Activated CD8-positive, alpha-beta memory T cell treated with anti-CD3 and anti-CD28 coated beads, Interleukin-2, amount 10 ng/mL, durations not matched to agents 7 days and 5 days (primary cell): ENCODE measurements at regions of chr6 and their contacts with region 1.

Region 1: GRCh38 chr6:30828027-30828960 is 56.0 kb upstream of the DDR1 start:
- DNase-seq: peak; percentile 86
- ATAC-seq: peak; percentile 83
- H3K4me3 Mint-ChIP-seq: peak overlapping the region; percentile 82
- H3K27ac Mint-ChIP-seq: peak overlapping the region; percentile 98
- H3K4me1 Mint-ChIP-seq: peaks cover 56% of the 10 kb centered on the region
- H3K27me3 Mint-ChIP-seq: no peaks in the 10 kb centered on the region

Region 2: DNA sequence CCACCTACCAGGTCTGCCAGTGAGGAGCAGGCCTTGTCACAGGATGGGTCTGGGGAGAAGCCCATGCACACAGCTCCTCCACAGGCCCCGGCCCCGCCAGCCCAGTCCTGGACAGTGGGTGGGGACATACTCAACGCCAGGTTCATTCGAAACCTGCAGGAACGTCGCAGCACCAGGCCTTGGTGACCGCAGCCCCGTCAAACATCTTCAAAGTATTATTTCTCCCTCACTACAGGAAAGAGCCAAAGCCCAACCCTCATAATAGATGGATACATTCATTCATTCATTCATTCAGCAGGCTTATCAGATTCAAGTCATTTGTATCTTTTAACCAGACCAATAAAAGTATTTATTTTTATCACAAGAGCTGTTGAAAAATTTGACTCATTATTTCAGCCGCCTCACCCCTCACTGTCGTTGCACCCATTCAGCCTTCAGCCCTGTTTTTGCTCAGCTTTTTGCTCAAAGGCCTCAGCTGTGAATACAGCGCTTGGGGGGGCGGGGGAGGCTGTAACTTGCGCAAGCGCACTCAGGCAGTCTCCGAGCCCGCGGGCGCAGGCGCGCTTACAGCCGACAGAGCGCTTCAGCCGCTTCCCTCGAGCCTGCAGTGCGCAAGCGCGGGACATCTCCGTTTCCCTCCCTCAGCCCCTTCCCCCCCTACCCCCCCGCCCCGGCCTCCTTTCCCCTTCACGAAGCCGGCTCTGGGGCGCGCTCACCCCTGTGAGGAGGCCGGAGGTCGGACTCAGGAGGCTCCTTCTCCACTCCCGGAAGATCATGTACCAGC is 181.6 kb before region 1 on chr6 and contains the start of gene C6orf136:
- CTCF ChIA-PET with region 1: no interaction called
- DNase-seq: peak; percentile 96
- ATAC-seq: peak; percentile 81
- H3K4me3 Mint-ChIP-seq: peak within 1 kb of the TSS; percentile 83
- H3K27ac Mint-ChIP-seq: peak within 1 kb of the TSS; percentile 88
- H3K4me1 Mint-ChIP-seq: peaks cover 26% of the 10 kb centered on the region
- H3K27me3 Mint-ChIP-seq: no peaks in the 10 kb centered on the region
- total RNA-seq, gene C6orf136: 32.5 to 33.9 TPM

Region 3: DNA sequence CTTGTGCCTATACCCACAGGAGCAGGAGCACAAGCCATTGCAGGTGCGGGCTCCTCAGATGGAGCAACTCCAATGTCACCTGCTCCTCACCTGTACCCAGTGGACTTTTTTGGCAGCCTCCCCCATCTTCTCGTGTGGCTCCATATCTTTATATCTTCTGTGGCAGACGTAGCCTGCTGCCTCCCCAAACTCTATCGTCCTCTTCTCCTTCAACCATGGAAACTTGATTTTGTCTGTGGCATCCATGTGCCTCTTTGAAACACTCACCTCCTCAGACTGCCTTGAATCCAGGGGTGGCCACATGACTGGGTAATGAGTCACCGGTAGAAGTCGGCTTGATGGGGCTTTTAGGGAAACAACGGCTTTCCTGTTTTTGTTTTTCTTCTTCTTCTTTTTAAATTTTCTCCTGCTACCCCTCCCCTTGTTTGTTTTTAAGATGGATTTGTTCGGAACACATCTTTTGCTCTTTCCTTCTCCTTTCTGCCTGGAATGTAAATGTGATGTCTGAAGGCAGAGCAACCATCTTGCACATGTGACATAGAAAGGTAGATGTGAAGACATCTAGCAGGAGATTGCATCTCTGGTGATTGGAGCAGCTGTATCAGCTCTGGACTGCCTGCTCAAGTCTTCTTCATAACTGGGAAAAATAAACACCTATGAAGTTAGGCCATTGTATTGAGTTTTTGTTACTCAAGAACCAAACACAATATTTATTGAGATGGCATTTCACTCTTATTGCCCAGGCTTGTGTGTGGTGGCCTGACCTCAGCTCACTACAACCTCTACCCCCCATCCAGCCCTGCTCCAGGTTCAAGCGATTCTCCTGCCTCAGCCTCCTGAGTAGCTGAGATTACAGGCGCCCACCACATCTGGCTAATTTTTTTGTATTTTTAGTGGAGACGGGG is 13.9 kb before region 1 on chr6:
- CTCF ChIA-PET with region 1: interaction called, 10 read pairs
- DNase-seq: peak; percentile 70
- ATAC-seq: peak; percentile 81
- H3K4me3 Mint-ChIP-seq: no peak overlapping the region
- H3K27ac Mint-ChIP-seq: peak overlapping the region; percentile 90
- H3K4me1 Mint-ChIP-seq: peaks cover 75% of the 10 kb centered on the region
- H3K27me3 Mint-ChIP-seq: no peaks in the 10 kb centered on the region

Region 4: DNA sequence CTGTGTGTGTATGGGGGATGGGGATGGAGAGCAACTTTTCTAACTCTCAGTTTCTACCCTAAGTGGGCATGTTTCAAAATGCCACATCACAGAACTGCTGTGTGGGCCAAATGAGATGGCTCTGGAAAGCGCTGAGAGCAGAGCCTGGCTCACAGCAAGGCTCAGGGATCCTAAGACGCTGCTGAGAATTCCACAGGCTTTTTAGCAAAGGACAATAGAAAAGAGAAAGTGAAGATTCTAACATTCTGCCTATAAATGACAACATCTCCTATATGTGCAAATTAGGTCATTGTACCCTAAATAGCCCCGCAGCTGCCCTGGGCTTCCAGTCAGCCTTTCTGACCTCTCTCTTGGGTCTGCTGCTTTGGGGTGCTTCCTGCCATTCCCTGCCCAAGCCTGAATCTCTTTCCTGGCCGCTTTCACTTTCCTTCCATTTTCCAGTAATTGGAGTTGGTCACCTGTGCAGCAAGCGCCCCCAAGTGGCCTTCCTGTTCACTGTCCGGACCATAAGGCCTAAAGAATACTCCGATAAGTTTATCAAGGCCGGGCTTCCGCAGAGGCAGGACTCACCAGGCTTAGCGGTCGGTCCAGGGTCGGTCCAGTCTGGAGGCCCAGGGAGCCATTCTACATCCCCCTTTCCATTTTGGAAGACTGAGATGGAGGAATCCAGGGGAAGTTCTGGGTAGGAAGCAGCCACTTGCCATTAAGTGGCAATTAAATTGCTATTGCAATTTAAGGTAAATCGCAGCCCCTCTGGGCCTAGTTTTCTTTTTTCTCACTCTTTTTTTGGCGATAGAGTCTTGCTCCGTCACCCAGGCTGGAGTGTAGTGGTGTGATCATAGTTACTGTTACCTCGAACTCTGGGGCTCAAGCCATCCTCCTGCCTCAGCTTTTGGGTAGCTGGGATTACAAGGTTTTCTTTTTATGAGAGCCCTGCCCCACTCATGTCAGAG is 49.4 kb after region 1 on chr6:
- CTCF ChIA-PET with region 1: interaction called, 191 read pairs
- DNase-seq: peak; percentile 86
- ATAC-seq: peak; percentile 96
- H3K4me3 Mint-ChIP-seq: peak overlapping the region; percentile 66
- H3K27ac Mint-ChIP-seq: peak overlapping the region; percentile 68
- H3K4me1 Mint-ChIP-seq: peaks cover 12% of the 10 kb centered on the region
- H3K27me3 Mint-ChIP-seq: peaks cover 4% of the 10 kb centered on the region

Region 5: DNA sequence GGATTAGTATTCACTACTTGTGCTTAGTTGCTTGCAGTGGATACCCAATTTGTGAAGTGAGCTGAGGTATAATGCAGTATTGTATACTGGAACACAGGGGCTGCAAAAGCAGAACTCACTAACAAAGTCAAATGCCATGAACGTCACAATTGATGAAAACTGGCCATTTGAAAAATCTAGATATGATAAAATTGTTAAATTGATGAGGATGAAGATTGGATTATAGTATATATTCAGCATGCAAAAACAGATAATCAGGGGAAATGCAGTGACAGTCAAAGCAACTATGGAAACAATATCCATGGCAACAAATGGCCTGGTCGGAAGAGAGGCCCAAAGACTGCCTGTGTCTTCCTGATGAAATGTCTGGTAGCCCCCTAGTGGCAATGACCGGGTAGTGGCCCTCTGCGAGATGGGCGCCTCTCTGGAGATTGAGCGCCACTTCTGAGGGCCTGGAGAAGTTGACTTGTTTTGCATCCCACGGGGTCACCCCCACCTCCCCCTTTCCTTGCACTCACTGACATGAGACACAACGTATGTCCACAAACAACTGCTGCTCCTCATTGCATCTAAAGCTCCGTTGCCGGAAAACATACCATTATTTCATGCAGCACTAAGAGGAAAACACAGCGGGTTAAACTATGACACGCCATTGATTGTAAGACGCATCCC is 240.5 kb after region 1 on chr6:
- CTCF ChIA-PET with region 1: interaction called, 19 read pairs
- DNase-seq: peak; percentile 85
- ATAC-seq: peak; percentile 99
- H3K4me3 Mint-ChIP-seq: no peak overlapping the region
- H3K27ac Mint-ChIP-seq: no peak overlapping the region
- H3K4me1 Mint-ChIP-seq: no peaks in the 10 kb centered on the region
- H3K27me3 Mint-ChIP-seq: peaks cover 15% of the 10 kb centered on the region

Region 6: DNA sequence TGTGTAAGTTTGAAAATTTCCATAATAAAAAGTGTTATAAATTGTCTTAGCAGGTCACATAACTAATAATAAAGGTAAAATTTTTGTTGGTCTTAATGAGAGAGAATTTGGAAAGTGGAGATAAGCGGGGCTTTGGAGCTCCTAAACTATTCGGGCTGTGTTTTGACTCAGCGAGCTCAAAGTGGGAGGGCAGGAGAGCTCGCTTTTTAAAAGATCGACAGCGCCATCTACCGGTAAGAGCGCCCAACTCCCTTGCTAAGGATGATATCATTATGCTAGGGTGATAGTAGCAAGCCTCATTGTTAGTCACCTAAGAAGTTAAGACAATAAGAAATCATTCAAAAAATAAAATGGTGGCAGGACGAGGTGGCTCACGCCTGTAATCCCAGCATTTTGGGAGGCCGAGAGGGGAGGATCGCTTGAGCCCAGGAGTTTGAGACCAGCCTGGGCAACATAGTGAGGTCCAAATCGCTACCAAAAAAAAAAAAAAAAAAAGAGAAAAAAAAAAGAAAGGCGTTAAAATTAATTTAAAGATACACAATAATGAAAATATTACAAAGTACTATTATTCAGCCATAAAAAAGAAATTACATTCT is 259.3 kb after region 1 on chr6:
- CTCF ChIA-PET with region 1: interaction called, 31 read pairs
- DNase-seq: peak; percentile 91
- ATAC-seq: peak; percentile 97
- H3K4me3 Mint-ChIP-seq: no peak overlapping the region
- H3K27ac Mint-ChIP-seq: no peak overlapping the region
- H3K4me1 Mint-ChIP-seq: peaks cover 6% of the 10 kb centered on the region
- H3K27me3 Mint-ChIP-seq: peaks cover 23% of the 10 kb centered on the region